BJ (cell line): ENCODE measurements at regions of chr1 and their contacts with region 1.

Region 1: GRCh38 chr1:27057801-27058625 is 45.4 kb upstream of the TENT5B start:
- DNase-seq: no peak
- H3K4me3 ChIP-seq: no peak overlapping the region
- H3K27me3 ChIP-seq: peaks cover 6% of the 10 kb centered on the region; the same call in 1 of the 2 replicates
- CTCF ChIP-seq: no peak

Region 2: DNA sequence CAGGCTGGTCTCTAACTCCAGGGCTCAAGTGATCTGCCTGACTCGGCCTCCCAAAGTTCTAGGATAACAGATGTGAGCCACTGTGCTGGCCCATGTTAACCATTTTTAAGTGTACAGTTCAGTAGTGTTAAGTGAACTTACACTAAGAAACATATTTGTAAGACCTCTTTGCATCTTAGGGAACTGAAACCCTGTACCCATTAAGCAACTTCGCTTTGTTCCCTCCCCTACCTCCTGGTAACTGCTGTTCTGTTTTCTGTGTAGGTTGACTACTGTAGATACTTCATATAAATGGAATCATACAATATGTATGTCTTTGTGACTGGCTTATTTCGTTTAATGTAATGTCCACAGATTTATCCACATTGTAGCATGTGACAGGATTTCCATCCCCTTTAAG is 125.5 kb before region 1 on chr1:
- CTCF ChIA-PET with region 1: no interaction called
- POLR2A ChIA-PET with region 1: no interaction called
- DNase-seq: no peak
- H3K4me3 ChIP-seq: no peak overlapping the region
- H3K27me3 ChIP-seq: no peaks in the 10 kb centered on the region
- CTCF ChIP-seq: no peak

Region 3: GRCh38 chr1:27071049-27071416 is 13.0 kb after region 1 on chr1:
- CTCF ChIA-PET with region 1: interaction called, 13 read pairs
- POLR2A ChIA-PET with region 1: no interaction called
- DNase-seq: peak; percentile 31
- H3K4me3 ChIP-seq: no peak overlapping the region
- H3K27me3 ChIP-seq: no peaks in the 10 kb centered on the region; the same call in none of the 2 replicates
- CTCF ChIP-seq: no peak

Region 4: GRCh38 chr1:27179379-27179778 is 121.4 kb after region 1 on chr1:
- CTCF ChIA-PET with region 1: no interaction called
- POLR2A ChIA-PET with region 1: no interaction called
- DNase-seq: no peak
- H3K4me3 ChIP-seq: no peak overlapping the region
- H3K27me3 ChIP-seq: no peaks in the 10 kb centered on the region
- CTCF ChIP-seq: no peak